Dendritic cell treated with granulocyte-macrophage colony-stimulating factor and Interleukin-4, amounts not matched to agents 40 ng/mL and 50 ng/mL, for 4 days (primary cell): ENCODE measurements at regions of chr6 and their contacts with region 1.

Region 1: GRCh38 chr6:132300323-132300949 is 100.8 kb downstream of the MOXD1 start:
- H3K4me3 Mint-ChIP-seq: no peak overlapping the region
- H3K27ac Mint-ChIP-seq: no peak overlapping the region
- H3K4me1 Mint-ChIP-seq: peaks cover 6% of the 10 kb centered on the region
- H3K27me3 Mint-ChIP-seq: peaks cover 3% of the 10 kb centered on the region

Region 2: GRCh38 chr6:132465530-132466485 is 165.4 kb after region 1 on chr6:
- intact Hi-C with region 1: loop called (anchors 5 kb)
- H3K4me3 Mint-ChIP-seq: no peak overlapping the region
- H3K27ac Mint-ChIP-seq: no peak overlapping the region
- H3K4me1 Mint-ChIP-seq: no peaks in the 10 kb centered on the region
- H3K27me3 Mint-ChIP-seq: no peaks in the 10 kb centered on the region

Region 3: GRCh38 chr6:132483779-132484679 is 183.6 kb after region 1 on chr6:
- intact Hi-C with region 1: loop called (anchors 1 kb)
- H3K4me3 Mint-ChIP-seq: no peak overlapping the region
- H3K27ac Mint-ChIP-seq: no peak overlapping the region
- H3K4me1 Mint-ChIP-seq: peaks cover 24% of the 10 kb centered on the region
- H3K27me3 Mint-ChIP-seq: no peaks in the 10 kb centered on the region